GM13977 (cell line): ENCODE measurements at regions of chr6 and their contacts with region 1.

Region 1: GRCh38 chr6:85923013-85923430 is 280.3 kb upstream of the SYNCRIP start:
- DNase-seq: peak; percentile 37
- CTCF ChIP-seq: peak; percentile 68

Region 2: DNA sequence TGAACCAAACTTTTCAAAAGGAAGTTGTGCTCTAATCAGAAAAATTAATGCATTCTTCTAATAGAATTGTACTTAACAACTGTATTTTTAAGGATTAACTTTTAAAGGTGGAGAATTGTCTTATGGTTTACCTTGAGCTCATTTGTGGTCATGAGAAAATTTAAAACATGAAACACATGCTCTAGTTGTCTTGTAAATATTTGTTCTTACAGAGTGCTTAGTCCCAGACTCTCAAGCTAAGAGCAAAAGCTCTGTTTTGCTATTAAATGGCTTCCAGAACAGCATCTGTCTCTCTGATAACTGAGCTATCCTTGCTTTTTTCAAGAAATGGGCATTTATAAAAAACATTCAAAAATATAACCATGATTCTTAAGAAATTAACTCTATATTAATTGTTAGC is 231.8 kb after region 1 on chr6:
- in situ Hi-C with region 1: no loop called
- DNase-seq: no peak
- CTCF ChIP-seq: no peak

Region 3: DNA sequence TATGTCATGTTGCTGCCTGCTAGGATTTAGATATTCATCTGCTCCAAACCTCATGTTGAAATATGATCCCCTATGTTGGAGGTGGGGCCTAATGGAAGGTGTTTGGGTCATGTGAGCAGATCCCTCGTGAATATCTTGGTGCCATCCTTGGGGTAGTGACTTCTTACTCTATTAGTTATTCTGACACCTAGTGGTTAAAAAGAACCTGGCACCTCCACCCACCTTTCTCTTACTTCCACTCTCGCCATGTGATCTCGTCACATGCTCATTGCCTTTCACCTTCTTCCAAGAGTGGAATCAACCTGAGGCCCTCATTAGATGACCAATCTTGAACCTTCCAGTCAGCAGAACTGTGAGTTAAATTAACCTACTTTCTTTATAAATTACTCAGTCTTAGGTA is 269.1 kb after region 1 on chr6:
- in situ Hi-C with region 1: loop called (anchors 25 kb)
- DNase-seq: no peak
- CTCF ChIP-seq: peak; percentile 47